ENCODE measurements at regions of chr18 and their contacts with region 1.

Region 1: DNA sequence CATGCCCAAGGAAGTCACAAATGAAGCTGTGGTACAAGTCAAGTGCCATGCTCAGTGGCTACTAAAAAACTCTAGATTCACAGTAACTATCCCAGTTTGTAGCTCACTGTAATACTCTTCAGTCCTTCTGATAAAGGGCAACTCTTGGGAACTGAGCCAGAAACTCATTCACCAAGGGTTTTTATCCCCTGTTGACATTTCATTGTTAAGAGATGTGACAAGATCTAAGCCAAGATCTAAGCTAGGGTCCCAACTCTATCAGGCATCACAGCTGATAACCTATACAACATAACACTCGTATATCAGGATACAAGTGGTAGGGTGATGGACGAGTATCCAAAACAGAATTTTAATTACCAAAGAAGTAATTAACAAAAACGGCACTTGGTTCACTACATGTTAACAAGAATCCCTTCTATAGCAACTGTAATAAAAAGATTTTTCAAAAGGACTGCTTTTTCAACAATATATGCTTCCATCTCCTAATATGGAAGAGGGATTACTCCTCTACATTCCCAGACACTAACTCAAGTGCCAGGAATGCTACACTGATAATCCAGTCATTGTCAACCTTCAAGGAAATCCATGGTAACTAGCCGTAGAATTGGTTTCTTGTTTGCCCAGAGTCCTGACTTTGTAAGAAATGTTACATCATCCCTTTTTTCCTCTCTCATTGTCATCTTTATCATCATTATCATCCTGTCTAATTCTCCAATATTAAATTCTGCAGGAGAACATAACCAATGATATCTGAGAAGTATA is 111.7 kb downstream of the CDH2 start:
- DNase-seq: peak; percentile 94
- ATAC-seq: peak; percentile 85
- H3K4me3 ChIP-seq: no peak overlapping the region
- H3K27ac ChIP-seq: peak overlapping the region; percentile 18
- H3K4me1 ChIP-seq: peaks cover 16% of the 10 kb centered on the region
- H3K27me3 ChIP-seq: no peaks in the 10 kb centered on the region
- CTCF ChIP-seq: no peak
- POLR2A ChIP-seq: no peak
- RAD21 ChIP-seq: no peak

Region 2: GRCh38 chr18:28108814-28109213 is 43.6 kb after region 1 on chr18:
- CTCF ChIA-PET with region 1: no interaction called
- POLR2A ChIA-PET with region 1: no interaction called
- dilution Hi-C with region 1: no loop called
- in situ Hi-C with region 1: no loop called
- intact Hi-C with region 1: loop called (anchors 5 kb)
- DNase-seq: no peak
- ATAC-seq: no peak
- H3K4me3 ChIP-seq: no peak overlapping the region
- H3K27ac ChIP-seq: no peak overlapping the region
- H3K4me1 ChIP-seq: peaks cover 17% of the 10 kb centered on the region
- H3K27me3 ChIP-seq: no peaks in the 10 kb centered on the region
- CTCF ChIP-seq: no peak
- POLR2A ChIP-seq: no peak
- RAD21 ChIP-seq: peak; percentile 37

Measured in IMR-90 (cell line).